ENCODE measurements at regions of chr14 and their contacts with region 1.

Region 1: DNA sequence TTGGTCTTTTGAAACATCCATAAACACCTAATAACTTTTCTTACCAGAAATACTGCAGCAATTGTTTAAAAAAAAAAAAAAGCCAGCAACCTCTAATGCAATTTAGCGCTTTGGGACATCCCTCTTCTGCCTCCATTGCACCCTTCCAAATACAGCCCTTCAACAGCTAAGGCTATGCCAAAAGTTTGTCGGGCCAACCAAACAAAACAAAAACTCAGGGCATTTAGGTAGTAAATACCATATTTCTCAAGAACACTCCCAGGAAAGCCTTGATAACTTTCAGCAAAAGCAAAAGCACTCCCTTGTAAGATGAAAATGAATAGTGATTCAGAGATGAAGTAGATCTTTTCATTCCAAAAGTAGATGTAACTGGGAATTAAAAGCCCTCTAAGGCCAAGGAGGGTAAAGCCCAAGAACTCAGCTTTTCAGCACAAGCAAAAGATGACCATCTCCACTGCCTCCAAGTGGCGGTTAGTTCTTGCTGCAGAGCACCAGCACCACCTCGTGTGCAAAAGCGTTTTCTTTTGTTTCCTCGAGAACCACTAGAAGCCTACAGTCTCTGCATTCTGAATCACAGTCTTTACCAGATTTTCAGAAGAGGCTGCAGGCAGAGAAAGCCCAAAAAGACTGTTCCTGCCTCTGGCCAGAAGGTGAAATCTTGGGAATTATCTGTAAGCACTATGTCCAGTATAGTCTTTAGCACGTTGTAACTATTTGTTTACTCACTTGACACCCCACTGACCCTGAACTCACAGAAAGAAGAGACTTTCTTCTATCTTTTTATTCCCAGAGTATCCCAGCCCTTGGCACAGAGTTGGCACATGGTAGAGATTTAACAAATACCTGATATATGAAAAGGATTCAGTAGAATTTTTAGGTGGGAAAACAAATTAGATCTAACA is 53.1 kb downstream of the SIX6 start:
- DNase-seq: peak; percentile 20 to 65 (median 29)
- H3K4me3 ChIP-seq: no peak overlapping the region
- H3K27ac ChIP-seq: no peak overlapping the region
- H3K4me1 ChIP-seq: no peaks in the 10 kb centered on the region
- H3K27me3 ChIP-seq: no peaks in the 10 kb centered on the region
- CTCF ChIP-seq: peak; percentile 9 to 54 (median 38)
- POLR2A ChIP-seq: no peak

Region 2: DNA sequence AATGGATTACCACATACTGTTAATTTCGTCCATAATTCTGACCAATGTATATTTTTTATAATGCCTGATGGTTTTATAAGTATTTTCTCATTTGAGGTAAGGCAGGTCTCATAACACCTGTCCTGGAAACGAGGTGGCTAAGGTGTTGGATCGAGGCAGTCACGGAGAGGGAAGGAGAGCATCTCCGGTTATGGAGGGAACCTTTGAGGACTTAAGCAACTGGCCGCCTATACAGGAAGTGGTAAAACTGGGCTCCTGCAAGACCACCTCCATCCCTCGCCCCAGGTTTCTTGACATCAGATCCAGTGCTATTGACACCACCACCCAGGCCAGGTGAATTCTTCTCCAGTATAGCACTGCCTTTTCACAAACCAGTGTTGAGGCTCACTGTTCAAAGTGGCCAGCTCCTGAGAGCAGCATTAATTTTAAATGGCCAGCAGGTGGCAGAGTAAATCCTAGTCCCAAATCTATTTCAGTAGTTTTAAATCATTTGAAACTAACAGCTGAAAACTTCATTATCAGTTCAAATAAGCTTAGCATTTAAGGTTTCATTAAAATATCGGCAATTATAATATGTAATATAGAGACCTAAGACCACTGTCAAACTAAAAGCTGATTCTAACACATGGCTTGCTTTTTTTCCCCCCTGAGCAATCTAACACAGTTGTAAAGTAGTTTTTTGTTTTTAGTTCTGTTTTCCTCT is 212.3 kb before region 1 on chr14:
- intact Hi-C with region 1: loop called in 1 of 2 experiments (anchors 5 kb)
- DNase-seq: peak in 6 of 7 donors; percentile 20 to 64 (median 31)
- H3K4me3 ChIP-seq: no peak overlapping the region
- H3K27ac ChIP-seq: no peak overlapping the region
- H3K4me1 ChIP-seq: no peaks in the 10 kb centered on the region
- H3K27me3 ChIP-seq: no peaks in the 10 kb centered on the region
- CTCF ChIP-seq: peak; percentile 55 to 76 (median 63)
- POLR2A ChIP-seq: no peak

Measured in adrenal gland (tissue), 19 donors.